Activated T-helper 2 cell treated with anti-CD3 and anti-CD28 coated beads, Interferon-gamma antibody, Interleukin-2, Interleukin-4, amounts not matched to agents 10 μg/mL and 5 μg/mL and 100 μg/mL, durations not matched to agents 14 hours and 24 hours and 36 hours (primary cell): ENCODE measurements at regions of chr12 and their contacts with region 1.

Region 1: DNA sequence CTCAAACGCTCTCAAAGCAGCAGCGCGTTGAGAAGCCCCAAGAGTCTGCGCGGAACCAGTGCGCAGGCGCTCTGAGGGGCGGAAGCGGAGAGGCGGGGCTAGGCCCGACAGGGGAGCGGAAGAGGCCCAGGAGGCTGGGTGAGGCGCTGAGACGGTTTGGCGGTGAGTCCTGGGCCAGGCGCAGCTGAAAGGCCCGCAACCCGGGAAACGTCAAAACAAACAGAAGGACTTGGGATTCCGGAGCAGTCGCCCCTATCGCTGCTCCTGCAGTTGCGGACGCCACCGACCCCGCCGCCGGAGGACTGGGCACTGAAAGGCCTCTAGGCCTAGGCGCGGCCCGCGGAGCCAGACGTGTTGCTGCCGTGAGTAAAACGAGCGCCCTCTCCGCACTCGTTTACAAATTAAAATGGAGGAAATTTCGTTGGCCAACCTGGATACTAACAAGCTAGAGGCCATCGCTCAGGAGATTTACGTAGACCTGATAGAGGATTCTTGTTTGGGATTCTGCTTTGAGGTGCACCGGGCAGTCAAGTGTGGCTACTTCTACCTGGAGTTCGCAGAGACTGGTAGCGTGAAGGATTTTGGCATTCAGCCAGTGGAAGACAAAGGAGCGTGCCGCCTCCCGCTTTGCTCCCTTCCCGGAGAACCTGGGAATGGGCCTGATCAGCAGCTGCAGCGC is at the start of gene ATXN7L3B:
- DNase-seq: peak; percentile 94
- H3K4me3 Mint-ChIP-seq: peak within 1 kb of the TSS; percentile 94
- H3K27ac Mint-ChIP-seq: peak within 1 kb of the TSS; percentile 97
- H3K4me1 Mint-ChIP-seq: peaks cover 39% of the 10 kb centered on the region
- H3K27me3 Mint-ChIP-seq: no peaks in the 10 kb centered on the region
- total RNA-seq, gene ATXN7L3B: 23.8 and 24.3 TPM in 2 replicates

Region 2: DNA sequence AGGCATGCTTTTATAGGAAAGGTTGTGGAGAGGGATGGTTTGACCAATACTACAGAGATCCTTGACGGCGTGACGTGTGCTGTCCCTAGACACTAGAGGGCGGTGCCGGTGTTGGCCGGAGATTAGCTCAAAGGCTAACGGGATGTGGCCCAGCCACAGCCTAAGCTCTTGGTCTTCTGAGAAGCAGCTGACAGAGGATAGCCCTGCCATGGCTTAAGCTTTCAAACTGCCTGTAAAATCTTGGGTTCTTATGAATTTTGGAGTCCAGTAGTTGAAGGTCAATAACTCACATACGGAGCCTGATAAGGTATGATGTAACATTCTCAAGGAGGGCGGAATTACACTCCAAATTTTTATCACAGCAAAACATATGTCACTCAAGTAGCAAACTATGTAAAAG is 515.9 kb before region 1 on chr12:
- intact Hi-C with region 1: loop called (anchors 2 kb)
- DNase-seq: no peak
- H3K4me3 Mint-ChIP-seq: no peak overlapping the region
- H3K27ac Mint-ChIP-seq: no peak overlapping the region
- H3K4me1 Mint-ChIP-seq: no peaks in the 10 kb centered on the region
- H3K27me3 Mint-ChIP-seq: no peaks in the 10 kb centered on the region

Region 3: GRCh38 chr12:74111688-74112360 is 426.0 kb before region 1 on chr12:
- intact Hi-C with region 1: loop called (anchors 10 kb)
- DNase-seq: no peak
- H3K4me3 Mint-ChIP-seq: no peak overlapping the region
- H3K27ac Mint-ChIP-seq: no peak overlapping the region
- H3K4me1 Mint-ChIP-seq: no peaks in the 10 kb centered on the region
- H3K27me3 Mint-ChIP-seq: no peaks in the 10 kb centered on the region

Region 4: DNA sequence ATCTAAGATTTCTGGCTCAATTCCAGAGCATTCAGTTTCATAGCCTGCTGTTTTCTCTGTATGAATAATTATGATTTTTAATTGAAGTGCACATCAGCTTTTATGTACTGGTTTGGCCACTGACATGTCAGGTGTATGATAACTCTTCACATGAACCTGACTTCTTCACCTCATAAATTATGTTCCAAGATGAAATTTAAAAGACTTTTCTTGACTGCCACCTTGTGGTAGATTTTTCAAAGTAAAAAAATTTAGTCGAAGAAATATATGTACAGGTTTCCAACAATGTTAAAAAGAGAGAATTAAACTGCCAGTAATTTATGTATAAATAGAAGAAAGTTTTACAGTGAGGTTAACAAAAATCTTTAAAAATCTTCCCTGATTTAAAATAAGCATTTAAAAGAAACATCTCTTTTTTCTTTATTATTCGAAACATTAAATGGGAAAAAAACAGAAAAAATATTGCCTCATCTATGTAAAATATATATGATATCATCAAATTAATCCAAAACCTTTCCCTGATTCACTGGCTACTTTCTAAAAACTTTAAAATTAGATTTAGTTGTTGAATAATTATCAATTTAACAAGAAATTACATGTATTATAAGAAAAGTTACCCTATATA is 125.1 kb before region 1 on chr12:
- intact Hi-C with region 1: loop called (anchors 5 kb)
- DNase-seq: no peak
- H3K4me3 Mint-ChIP-seq: no peak overlapping the region
- H3K27ac Mint-ChIP-seq: no peak overlapping the region
- H3K4me1 Mint-ChIP-seq: no peaks in the 10 kb centered on the region
- H3K27me3 Mint-ChIP-seq: peaks cover 1% of the 10 kb centered on the region